GM18951 (cell line): ENCODE measurements at regions of chr4 and their contacts with region 1.

Region 1: DNA sequence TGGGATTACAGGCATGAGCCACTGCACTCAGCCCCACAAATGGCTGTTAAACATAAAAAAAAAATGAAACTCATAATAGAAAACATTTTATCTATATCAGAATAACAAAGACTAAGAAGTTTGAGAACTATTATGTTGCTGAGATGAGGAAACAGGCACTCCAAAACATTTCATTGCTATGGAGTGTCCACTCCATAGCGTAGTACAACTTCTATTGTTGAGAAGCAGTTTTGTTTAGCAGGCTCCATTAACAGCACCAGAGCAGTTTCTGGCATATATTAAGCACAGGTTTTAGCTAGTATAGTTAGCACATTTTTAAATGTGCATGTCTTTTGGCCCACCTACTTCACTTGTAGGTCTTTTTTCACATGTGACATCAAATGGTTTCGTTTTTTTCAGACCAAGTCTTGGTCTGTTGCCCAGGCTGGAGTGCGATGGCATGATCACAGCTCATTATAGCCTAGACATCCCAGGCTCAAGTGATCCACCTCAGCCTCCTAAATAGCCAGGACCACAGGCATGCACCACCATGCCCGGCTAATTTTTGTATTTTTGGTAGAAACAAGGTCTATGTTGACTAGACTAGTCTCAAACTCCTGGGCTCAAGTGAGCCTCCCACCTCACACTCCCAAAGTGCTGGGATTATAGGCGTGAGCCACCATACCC is 5.8 kb downstream of the HMGB2 start:
- POLR2A ChIP-seq: no peak

Region 2: DNA sequence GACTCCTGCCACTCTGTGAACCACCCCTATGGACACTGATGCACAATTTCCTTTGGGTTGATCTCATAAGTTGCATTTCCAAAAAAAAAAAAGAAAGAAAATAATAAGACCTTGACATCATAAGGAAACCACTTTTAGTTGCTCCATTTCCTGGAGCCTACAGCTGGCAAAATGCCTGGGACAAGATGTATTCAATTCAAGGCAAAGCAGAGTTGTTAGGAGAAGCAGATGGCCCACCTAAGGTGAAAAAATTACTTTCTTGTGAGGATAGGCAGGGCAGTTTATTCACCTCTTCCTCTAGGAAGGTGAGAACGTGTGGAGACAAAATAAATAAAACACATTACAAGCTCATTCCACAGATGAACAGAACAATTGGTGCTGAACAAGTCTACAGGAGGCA is 84.7 kb after region 1 on chr4:
- in situ Hi-C with region 1: loop called (anchors 5 kb)
- POLR2A ChIP-seq: no peak